Right cardiac atrium (tissue), 5 donors: ENCODE measurements at regions of chr19 and their contacts with region 1.

Region 1: DNA sequence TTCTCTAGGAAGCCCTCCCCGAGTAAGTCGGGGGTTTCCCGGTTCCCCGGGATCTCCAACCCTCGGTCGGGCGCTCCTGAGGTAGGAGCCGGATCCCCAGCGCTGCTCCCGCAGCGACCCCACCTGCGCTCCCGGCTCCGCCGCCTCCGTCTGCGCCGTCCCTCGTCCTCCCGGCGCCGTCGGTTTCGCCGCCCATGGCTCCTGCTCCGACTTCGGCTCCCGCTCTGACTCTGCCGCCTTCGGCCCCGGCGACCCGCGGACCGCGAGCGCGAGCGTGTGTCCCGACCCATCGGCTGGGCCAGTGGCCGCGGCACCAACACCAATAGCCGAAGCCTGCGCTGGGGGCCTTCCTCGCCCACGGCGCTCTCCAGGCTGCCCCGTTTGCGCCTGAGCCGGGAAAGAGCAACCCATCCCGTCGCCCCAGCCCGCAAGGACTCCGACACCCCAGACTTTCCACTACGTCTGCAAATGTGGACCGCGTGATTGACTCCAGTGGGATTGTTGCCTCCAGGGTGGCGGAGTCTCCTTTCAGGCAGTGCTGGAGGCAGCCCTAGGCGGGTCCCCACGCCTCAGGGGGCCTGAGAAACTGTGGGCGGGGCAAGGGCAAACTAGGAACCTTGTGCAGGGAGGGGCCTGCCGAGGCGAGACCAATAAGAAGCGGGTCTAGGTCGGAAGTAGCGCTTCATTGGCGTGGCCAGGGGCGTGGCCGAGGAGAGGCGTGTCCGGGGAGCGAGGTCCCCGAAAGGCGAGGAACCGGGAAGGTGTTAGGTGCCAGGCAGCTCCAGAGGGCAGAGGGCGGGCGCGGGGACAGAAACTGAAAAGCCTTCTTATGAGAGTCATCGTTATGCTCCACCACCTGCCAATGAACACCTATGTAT is at the start of gene CACTIN:
- DNase-seq: peak; percentile 99 to 100 (median 100)
- ATAC-seq: peak; percentile 97 to 98
- H3K4me3 ChIP-seq: peak within 1 kb of the TSS; percentile 46
- H3K27ac ChIP-seq: peak within 1 kb of the TSS; percentile 86
- H3K4me1 ChIP-seq: no peaks in the 10 kb centered on the region
- H3K27me3 ChIP-seq: no peaks in the 10 kb centered on the region
- total RNA-seq, gene CACTIN: 13.8 to 17.8 (median 14.4) TPM

Region 2: DNA sequence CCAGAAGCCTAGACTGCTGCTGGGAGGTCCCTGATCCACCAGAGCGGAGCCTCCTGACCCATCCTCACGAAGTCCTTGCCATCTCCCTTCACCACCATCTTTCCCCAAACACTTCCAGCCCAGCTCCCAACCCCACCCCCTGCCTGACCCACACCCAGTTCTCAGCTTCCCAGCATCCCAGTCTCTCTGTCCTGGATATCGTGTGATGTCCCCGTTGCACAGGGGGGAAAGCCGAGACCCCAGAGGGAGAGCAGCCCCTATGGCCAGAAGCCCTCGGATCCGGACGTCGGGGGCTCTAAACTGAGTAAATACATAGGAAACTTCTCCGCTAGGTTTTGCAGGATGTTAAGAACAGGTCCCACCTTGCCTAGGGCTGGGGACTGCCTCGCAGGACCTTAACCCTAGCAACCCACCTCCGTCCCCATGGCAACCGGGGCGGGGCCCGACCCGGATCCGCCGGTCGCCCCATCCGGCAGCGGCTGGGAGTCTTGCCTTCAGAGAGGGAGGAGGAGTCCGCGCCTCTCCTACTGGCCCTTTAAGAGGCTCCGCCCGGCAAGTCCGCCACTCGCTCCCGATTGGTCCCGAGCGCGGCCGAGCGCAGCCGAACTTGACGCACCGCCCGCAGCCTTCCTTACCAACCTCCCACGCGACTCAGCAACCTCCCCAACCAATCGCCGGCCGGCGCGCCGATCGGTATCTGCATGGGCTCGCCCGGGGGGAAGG is 54.4 kb before region 1 on chr19:
- intact Hi-C with region 1: loop called in 1 of 4 experiments (anchors 10 kb)
- DNase-seq: peak; percentile 100
- ATAC-seq: peak; percentile 96 to 98
- H3K4me3 ChIP-seq: peak overlapping the region; percentile 57
- H3K27ac ChIP-seq: no peak overlapping the region
- H3K4me1 ChIP-seq: no peaks in the 10 kb centered on the region
- H3K27me3 ChIP-seq: no peaks in the 10 kb centered on the region

Region 3: DNA sequence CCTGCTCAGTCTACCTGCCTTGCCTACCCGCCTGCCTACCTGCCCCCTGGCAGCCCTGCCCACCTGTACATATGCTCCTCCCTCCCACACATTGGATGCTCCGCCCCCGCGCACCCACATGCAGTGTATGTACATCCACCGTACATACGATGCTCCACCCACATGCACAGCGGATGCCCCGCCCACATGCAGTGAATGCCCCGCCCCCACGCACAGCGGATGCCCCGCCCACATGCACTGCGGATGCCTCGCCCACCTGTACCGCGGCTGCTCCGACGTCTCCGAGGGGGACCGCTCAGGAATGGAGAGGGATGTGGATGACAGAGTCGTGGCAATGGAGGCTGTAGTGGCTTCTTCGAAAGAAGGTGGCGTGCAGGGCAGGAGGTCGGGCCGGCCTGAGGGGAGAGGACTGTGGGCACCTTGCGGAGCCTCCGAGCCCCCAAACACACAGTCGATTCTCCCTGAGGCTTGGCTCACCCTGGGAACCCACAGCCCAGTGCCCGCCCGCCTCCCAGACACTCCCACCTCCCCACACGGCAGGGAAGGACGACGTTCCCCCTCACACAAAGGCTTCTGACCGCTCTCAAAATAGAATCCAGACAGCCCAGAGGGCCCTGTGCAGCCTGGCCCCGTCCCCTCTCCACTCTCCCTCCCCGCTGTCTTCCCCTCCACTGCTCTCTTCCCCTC is 16.4 kb after region 1 on chr19:
- intact Hi-C with region 1: no loop called
- DNase-seq: no peak
- ATAC-seq: peak in 1 of 2 donors; percentile 30
- H3K4me3 ChIP-seq: no peak overlapping the region
- H3K27ac ChIP-seq: no peak overlapping the region
- H3K4me1 ChIP-seq: no peaks in the 10 kb centered on the region
- H3K27me3 ChIP-seq: no peaks in the 10 kb centered on the region